ENCODE measurements at regions of chr2 and their contacts with region 1.

Region 1: DNA sequence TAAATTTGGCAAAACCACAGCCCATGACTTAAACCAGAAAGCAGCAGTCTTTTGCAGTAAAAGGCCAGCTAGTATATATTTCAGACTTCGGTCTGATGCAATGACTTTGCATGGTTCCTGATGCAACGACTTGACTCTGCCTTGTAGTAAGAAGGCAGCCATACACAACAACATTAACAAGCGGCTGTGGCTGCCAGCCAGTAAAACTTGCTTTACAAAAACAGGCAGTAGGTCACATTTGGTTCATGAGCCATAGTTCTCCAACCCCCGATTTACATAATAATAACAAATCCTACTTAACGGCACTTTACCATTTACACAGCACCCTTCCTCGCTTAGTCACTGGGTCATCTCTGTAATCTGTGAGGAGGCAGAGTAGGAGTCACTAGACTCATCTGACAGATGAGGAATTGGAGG is 410.3 kb downstream of the LRATD1 start:
- DNase-seq: peak; percentile 98
- ATAC-seq: peak; percentile 87
- H3K4me3 ChIP-seq: no peak overlapping the region
- H3K27ac ChIP-seq: peak overlapping the region; percentile 99
- H3K4me1 ChIP-seq: peaks cover 16% of the 10 kb centered on the region
- H3K27me3 ChIP-seq: no peaks in the 10 kb centered on the region
- CTCF ChIP-seq: no peak
- POLR2A ChIP-seq: no peak
- RAD21 ChIP-seq: no peak

Region 2: GRCh38 chr2:15169326-15170069 is 126.7 kb after region 1 on chr2:
- CTCF ChIA-PET with region 1: no interaction called
- POLR2A ChIA-PET with region 1: no interaction called
- dilution Hi-C with region 1: no loop called
- in situ Hi-C with region 1: no loop called
- intact Hi-C with region 1: loop called (anchors 5 kb)
- DNase-seq: peak; percentile 98
- ATAC-seq: peak; percentile 95
- H3K4me3 ChIP-seq: peak overlapping the region; percentile 26; the same call in 1 of the 2 replicates
- H3K27ac ChIP-seq: peak overlapping the region; percentile 96
- H3K4me1 ChIP-seq: peaks cover 15% of the 10 kb centered on the region
- H3K27me3 ChIP-seq: no peaks in the 10 kb centered on the region
- CTCF ChIP-seq: no peak
- POLR2A ChIP-seq: no peak
- RAD21 ChIP-seq: no peak; the same call in 1 of the 2 replicates

Region 3: DNA sequence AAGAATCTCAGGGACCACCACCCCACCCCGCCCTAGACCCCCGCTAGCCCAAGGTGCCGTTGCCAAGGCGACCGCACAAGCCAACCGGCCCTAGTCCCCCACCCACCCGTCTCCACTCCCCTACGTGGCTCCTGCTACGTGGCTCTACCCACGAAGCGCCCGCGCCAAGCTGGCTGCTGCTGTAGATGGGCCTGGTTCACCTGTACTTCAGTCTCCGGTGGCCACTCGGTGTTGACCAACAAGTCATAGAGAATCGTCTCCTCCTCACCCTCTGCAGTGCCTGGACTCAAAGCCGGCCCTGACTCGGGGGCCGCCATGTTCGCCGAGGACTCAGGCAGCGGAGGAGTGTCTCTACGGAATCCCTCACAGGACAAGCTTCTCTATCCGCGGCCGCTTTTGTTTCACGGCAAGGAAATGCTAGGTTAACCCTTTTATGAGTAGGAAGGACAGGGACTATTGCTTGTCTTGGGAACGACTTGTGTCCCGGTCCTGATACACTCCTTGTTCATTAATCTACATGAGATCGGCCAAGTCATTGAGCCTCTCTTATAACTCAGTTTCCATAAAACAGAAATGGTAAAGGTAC is 518.3 kb after region 1 on chr2 and contains the start of gene NBAS:
- CTCF ChIA-PET with region 1: no interaction called
- POLR2A ChIA-PET with region 1: no interaction called
- dilution Hi-C with region 1: no loop called
- in situ Hi-C with region 1: no loop called
- intact Hi-C with region 1: loop called (anchors 10 kb)
- DNase-seq: peak; percentile 85
- ATAC-seq: peak; percentile 92
- H3K4me3 ChIP-seq: peak within 1 kb of the TSS; percentile 90
- H3K27ac ChIP-seq: peak within 1 kb of the TSS; percentile 98
- H3K4me1 ChIP-seq: no peaks in the 10 kb centered on the region
- H3K27me3 ChIP-seq: no peaks in the 10 kb centered on the region
- CTCF ChIP-seq: no peak
- POLR2A ChIP-seq: peak; percentile 75
- RAD21 ChIP-seq: no peak
- total RNA-seq, gene NBAS: 88.9 and 105 TPM in 2 replicates

Region 4: GRCh38 chr2:15588329-15588919 is 545.6 kb after region 1 on chr2:
- CTCF ChIA-PET with region 1: no interaction called
- POLR2A ChIA-PET with region 1: no interaction called
- dilution Hi-C with region 1: no loop called
- in situ Hi-C with region 1: loop called (anchors 25 kb)
- intact Hi-C with region 1: loop called (anchors 5 kb)
- DNase-seq: peak; percentile 54
- ATAC-seq: no peak
- H3K4me3 ChIP-seq: no peak overlapping the region
- H3K27ac ChIP-seq: no peak overlapping the region
- H3K4me1 ChIP-seq: no peaks in the 10 kb centered on the region
- H3K27me3 ChIP-seq: peaks cover 3% of the 10 kb centered on the region; the same call in 1 of the 2 replicates
- CTCF ChIP-seq: peak; percentile 65
- POLR2A ChIP-seq: no peak
- RAD21 ChIP-seq: peak; percentile 68

Measured in IMR-90 (cell line).